IMR-90 (cell line): ENCODE measurements at regions of chr1 and their contacts with region 1.

Region 1: DNA sequence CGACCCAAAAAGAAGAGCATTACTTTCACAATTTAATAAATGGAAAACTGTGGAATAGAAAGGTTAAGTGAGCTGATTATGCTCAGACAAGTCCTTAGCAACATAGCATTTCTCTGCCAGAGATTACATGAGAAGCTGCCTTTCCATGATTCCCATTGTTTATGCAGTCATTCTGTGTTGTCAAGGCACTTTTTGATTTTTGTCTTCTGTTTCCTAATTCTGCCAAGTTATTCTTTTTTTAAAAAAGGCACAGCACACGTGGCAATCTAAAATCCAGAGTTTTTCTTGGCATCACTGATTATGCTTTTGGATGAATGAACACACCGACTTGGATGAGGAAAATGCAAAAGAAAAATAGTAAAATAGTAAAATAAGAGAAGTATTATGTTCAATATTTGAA is 185.0 kb downstream of the RGS7 start:
- DNase-seq: no peak
- ATAC-seq: no peak
- H3K4me3 ChIP-seq: no peak overlapping the region
- H3K27ac ChIP-seq: no peak overlapping the region
- H3K4me1 ChIP-seq: no peaks in the 10 kb centered on the region
- H3K27me3 ChIP-seq: no peaks in the 10 kb centered on the region
- CTCF ChIP-seq: no peak
- POLR2A ChIP-seq: no peak
- RAD21 ChIP-seq: no peak

Region 2: DNA sequence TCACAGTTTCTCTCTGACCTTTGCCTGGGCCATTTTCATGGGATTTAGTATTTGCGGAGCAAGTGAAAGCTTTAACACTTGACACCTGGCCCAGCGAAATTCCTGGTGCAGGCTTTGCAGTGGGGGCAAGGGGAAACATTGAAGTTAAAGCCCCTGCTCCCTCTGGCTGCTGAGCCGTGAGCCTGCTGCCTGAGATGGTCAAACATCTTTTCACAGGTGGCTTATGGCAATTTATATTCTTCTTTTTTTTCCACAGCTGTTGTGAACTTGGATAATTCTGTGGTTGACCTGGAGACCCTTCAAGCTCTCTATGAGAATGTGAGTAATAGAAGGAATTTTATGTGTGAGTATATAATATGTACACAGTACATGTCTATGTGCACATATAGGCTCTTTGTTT is 877.4 kb before region 1 on chr1:
- CTCF ChIA-PET with region 1: no interaction called
- POLR2A ChIA-PET with region 1: no interaction called
- dilution Hi-C with region 1: no loop called
- in situ Hi-C with region 1: no loop called
- intact Hi-C with region 1: no loop called
- DNase-seq: peak; percentile 70
- ATAC-seq: no peak
- H3K4me3 ChIP-seq: no peak overlapping the region
- H3K27ac ChIP-seq: no peak overlapping the region
- H3K4me1 ChIP-seq: peaks cover 7% of the 10 kb centered on the region
- H3K27me3 ChIP-seq: no peaks in the 10 kb centered on the region
- CTCF ChIP-seq: no peak
- POLR2A ChIP-seq: no peak
- RAD21 ChIP-seq: no peak

Region 3: GRCh38 chr1:241077386-241078147 is 94.4 kb before region 1 on chr1:
- CTCF ChIA-PET with region 1: no interaction called
- POLR2A ChIA-PET with region 1: interaction called, 21 read pairs
- dilution Hi-C with region 1: no loop called
- in situ Hi-C with region 1: no loop called
- intact Hi-C with region 1: no loop called
- DNase-seq: no peak
- ATAC-seq: no peak
- H3K4me3 ChIP-seq: no peak overlapping the region
- H3K27ac ChIP-seq: no peak overlapping the region
- H3K4me1 ChIP-seq: no peaks in the 10 kb centered on the region
- H3K27me3 ChIP-seq: no peaks in the 10 kb centered on the region
- CTCF ChIP-seq: no peak
- POLR2A ChIP-seq: no peak
- RAD21 ChIP-seq: no peak